ENCODE measurements at regions of chr15 and their contacts with region 1.

Region 1: GRCh38 chr15:89971592-89971997 is 29.5 kb upstream of the ZNF710 start:
- DNase-seq: peak; percentile 76
- H3K4me3 Mint-ChIP-seq: no peak overlapping the region
- H3K27ac Mint-ChIP-seq: no peak overlapping the region
- H3K4me1 Mint-ChIP-seq: no peaks in the 10 kb centered on the region
- H3K27me3 Mint-ChIP-seq: no peaks in the 10 kb centered on the region

Region 2: GRCh38 chr15:89936051-89936785 is 35.4 kb before region 1 on chr15:
- CTCF ChIA-PET with region 1: no interaction called
- POLR2A ChIA-PET with region 1: no interaction called
- intact Hi-C with region 1: loop called (anchors 1 kb)
- DNase-seq: peak; percentile 17
- H3K4me3 Mint-ChIP-seq: no peak overlapping the region
- H3K27ac Mint-ChIP-seq: no peak overlapping the region
- H3K4me1 Mint-ChIP-seq: peaks cover 20% of the 10 kb centered on the region
- H3K27me3 Mint-ChIP-seq: peaks cover 3% of the 10 kb centered on the region

Region 3: GRCh38 chr15:90174140-90174875 is 202.7 kb after region 1 on chr15:
- CTCF ChIA-PET with region 1: no interaction called
- POLR2A ChIA-PET with region 1: no interaction called
- intact Hi-C with region 1: no loop called
- DNase-seq: no peak
- H3K4me3 Mint-ChIP-seq: no peak overlapping the region
- H3K27ac Mint-ChIP-seq: no peak overlapping the region
- H3K4me1 Mint-ChIP-seq: peaks cover 10% of the 10 kb centered on the region
- H3K27me3 Mint-ChIP-seq: no peaks in the 10 kb centered on the region